PC-9 (cell line): ENCODE measurements at regions of chr10 and their contacts with region 1.

Region 1: DNA sequence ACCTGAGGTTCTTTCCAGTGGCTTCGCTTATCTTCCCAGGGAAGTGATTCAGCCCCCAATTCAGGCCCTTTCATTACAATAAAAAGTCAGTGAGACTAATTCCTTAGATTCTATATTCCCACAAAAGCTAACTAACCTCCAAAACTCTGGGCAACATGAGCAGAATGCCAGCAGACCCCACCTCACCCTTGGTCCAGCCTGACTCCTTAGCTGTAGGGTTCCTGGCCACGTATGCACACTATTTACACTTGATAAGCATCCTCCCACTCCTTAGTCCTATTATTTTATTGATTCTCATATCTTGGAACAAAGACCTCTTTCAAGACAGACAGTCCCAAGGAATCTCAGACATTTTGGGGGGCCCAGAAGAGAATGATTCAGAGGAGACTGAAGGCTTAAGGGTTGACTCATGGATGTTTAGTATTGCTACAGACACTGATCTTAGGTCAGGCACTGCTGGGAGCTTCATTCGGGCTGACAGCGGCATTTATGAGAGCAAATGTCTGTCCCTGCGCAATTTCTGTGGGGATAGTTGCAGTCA is 162.6 kb upstream of the GDF10 start:
- DNase-seq: peak; percentile 19 to 88
- H3K4me3 ChIP-seq: peak overlapping the region; percentile 40; the same call in 1 of the 2 replicates
- H3K27ac ChIP-seq: peak overlapping the region; percentile 53
- H3K4me1 ChIP-seq: peaks cover 41% of the 10 kb centered on the region
- H3K27me3 ChIP-seq: no peaks in the 10 kb centered on the region
- CTCF ChIP-seq: no peak

Region 2: GRCh38 chr10:47020471-47020870 is 116.9 kb before region 1 on chr10:
- CTCF ChIA-PET with region 1: no interaction called
- POLR2A ChIA-PET with region 1: no interaction called
- intact Hi-C with region 1: no loop called
- DNase-seq: no peak
- H3K4me3 ChIP-seq: no peak overlapping the region
- H3K27ac ChIP-seq: no peak overlapping the region
- H3K4me1 ChIP-seq: no peaks in the 10 kb centered on the region
- H3K27me3 ChIP-seq: no peaks in the 10 kb centered on the region
- CTCF ChIP-seq: no peak

Region 3: GRCh38 chr10:47104786-47105385 is 32.5 kb before region 1 on chr10:
- CTCF ChIA-PET with region 1: no interaction called
- POLR2A ChIA-PET with region 1: no interaction called
- intact Hi-C with region 1: no loop called
- DNase-seq: no peak
- H3K4me3 ChIP-seq: no peak overlapping the region
- H3K27ac ChIP-seq: no peak overlapping the region
- H3K4me1 ChIP-seq: no peaks in the 10 kb centered on the region; the same call in 1 of the 2 replicates
- H3K27me3 ChIP-seq: no peaks in the 10 kb centered on the region
- CTCF ChIP-seq: no peak

Region 4: GRCh38 chr10:47276071-47276470 is 138.7 kb after region 1 on chr10:
- CTCF ChIA-PET with region 1: interaction called, 11 read pairs
- POLR2A ChIA-PET with region 1: no interaction called
- intact Hi-C with region 1: no loop called
- DNase-seq: no peak
- H3K4me3 ChIP-seq: no peak overlapping the region
- H3K27ac ChIP-seq: no peak overlapping the region
- H3K4me1 ChIP-seq: no peaks in the 10 kb centered on the region
- H3K27me3 ChIP-seq: peaks cover 12% of the 10 kb centered on the region
- CTCF ChIP-seq: no peak